Caco-2 (cell line): ENCODE measurements at regions of chr6 and their contacts with region 1.

Region 1: GRCh38 chr6:7107578-7108195 is at the start of gene RREB1:
- DNase-seq: peak; percentile 65 to 73
- H3K4me3 ChIP-seq: peak within 1 kb of the TSS; percentile 63
- H3K4me3 Mint-ChIP-seq: peak within 1 kb of the TSS; percentile 68
- H3K27ac Mint-ChIP-seq: peak within 1 kb of the TSS; percentile 82
- H3K4me1 ChIP-seq: peaks cover 23% of the 10 kb centered on the region
- H3K4me1 Mint-ChIP-seq: peaks cover 11% of the 10 kb centered on the region
- H3K27me3 ChIP-seq: no peaks in the 10 kb centered on the region
- H3K27me3 Mint-ChIP-seq: no peaks in the 10 kb centered on the region
- CTCF ChIP-seq: no peak
- total RNA-seq, gene RREB1: 48.6 and 51.1 TPM in 2 replicates

Region 2: GRCh38 chr6:7051233-7052114 is 56.2 kb before region 1 on chr6:
- CTCF ChIA-PET with region 1: no interaction called
- POLR2A ChIA-PET with region 1: no interaction called
- intact Hi-C with region 1: loop called (anchors 2 kb)
- DNase-seq: peak; percentile 74 to 75
- H3K4me3 ChIP-seq: peak overlapping the region; percentile 77
- H3K4me3 Mint-ChIP-seq: peak overlapping the region; percentile 73
- H3K27ac Mint-ChIP-seq: peak overlapping the region; percentile 55
- H3K4me1 ChIP-seq: peaks cover 3% of the 10 kb centered on the region; the same call in 1 of the 2 replicates
- H3K4me1 Mint-ChIP-seq: peaks cover 3% of the 10 kb centered on the region
- H3K27me3 ChIP-seq: no peaks in the 10 kb centered on the region
- H3K27me3 Mint-ChIP-seq: no peaks in the 10 kb centered on the region
- CTCF ChIP-seq: no peak

Region 3: DNA sequence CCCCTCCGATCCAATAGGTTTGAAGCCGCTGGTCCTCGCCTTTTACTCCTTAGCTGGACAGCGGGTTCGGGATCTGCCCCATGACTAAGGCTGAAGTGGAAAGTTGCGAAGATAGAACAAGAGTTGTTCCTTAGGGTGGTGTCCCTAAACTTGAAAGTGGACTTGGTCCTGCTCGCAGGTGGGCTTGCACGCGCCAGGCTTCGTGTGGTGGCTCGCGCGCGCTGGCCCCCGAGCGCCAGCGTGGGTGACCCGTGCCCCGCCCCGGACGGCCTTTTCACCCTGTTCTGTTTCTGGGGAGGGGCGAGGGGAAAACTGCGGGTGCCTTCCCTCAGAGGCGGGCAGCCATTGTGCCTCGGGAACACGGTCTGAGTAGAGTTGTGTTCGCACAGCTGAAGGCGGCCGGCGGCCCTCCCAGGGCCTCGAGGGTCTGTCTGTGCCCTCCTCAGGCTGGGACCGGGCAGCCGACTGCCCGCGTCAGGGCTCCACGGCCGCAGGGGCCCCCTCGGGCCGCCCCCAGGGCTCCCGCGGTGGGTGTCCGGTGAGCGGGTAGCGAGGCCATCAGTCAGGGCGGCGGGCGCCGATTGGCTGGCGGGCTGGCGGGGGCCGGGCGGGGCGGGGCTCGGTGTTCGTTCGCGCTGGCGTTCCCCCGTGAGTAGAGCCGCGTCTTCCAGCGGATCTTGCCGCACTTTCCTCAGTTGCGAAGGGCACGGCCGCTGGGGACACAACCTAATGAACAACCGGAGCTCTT is 33.1 kb after region 1 on chr6:
- CTCF ChIA-PET with region 1: no interaction called
- POLR2A ChIA-PET with region 1: no interaction called
- intact Hi-C with region 1: loop called (anchors 2 kb)
- DNase-seq: peak; percentile 85 to 91
- H3K4me3 ChIP-seq: peak overlapping the region; percentile 52
- H3K4me3 Mint-ChIP-seq: peak overlapping the region; percentile 71
- H3K27ac Mint-ChIP-seq: peak overlapping the region; percentile 67
- H3K4me1 ChIP-seq: peaks cover 56% of the 10 kb centered on the region
- H3K4me1 Mint-ChIP-seq: peaks cover 47% of the 10 kb centered on the region
- H3K27me3 ChIP-seq: no peaks in the 10 kb centered on the region
- H3K27me3 Mint-ChIP-seq: no peaks in the 10 kb centered on the region
- CTCF ChIP-seq: no peak